ENCODE measurements at regions of chr12 and their contacts with region 1.

Region 1: GRCh38 chr12:132761032-132761920 is at the start of gene ANKLE2:
- H3K4me3 Mint-ChIP-seq: peak within 1 kb of the TSS; percentile 92
- H3K27ac Mint-ChIP-seq: peak within 1 kb of the TSS; percentile 87
- H3K4me1 Mint-ChIP-seq: peaks cover 47% of the 10 kb centered on the region
- H3K27me3 Mint-ChIP-seq: no peaks in the 10 kb centered on the region

Region 2: DNA sequence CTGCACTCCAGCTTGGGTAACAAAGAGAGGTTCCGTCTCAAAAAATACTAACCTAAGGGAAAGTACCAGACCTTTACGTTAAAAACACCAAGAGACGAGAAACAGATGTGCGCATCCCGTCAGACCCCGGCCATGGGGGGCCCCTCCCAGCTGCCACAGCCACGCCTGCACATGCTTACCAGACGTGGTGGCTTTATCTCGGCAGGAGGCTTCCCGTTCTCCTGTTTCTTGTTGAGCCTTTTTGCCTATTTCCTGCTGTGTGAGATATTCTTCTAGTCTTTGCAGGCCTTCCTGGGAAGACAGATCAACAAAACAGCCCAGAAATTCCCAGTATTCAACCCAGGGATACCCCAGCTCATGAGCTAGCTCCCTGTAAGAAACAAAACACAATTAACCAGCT is 27.1 kb before region 1 on chr12:
- intact Hi-C with region 1: no loop called
- H3K4me3 Mint-ChIP-seq: no peak overlapping the region
- H3K27ac Mint-ChIP-seq: no peak overlapping the region
- H3K4me1 Mint-ChIP-seq: no peaks in the 10 kb centered on the region
- H3K27me3 Mint-ChIP-seq: no peaks in the 10 kb centered on the region

Region 3: DNA sequence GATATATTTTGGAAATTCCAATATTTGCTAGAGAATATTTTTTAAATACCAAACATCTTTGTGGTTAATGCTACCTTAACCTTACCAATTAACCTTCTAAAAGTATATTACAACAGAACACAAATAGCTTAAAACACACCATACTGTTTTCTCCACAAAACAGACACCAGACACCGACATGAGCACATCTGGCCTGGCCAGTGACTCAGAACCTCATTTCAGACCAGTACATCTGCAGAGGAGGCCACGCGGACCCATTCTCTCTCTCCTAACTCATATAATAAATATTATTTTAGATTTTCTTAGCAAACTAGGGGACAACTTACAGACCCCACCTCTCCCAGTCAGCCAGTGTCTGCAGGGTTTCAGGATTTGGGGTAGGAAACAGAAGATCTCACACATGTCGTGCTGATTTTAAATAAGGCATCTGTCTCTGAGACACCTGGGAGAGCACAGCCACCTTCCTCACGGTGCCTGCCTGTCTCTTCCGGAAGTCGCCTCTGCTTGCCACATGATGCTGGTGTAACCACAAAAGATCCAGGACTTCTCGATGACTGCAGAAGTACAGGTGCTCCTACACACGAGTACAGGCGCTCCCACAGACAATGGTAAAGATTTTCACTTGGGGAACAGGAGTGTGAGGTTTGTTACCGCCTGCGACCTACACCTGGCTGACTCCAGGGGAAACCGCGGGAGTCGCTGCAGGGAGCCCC is 10.0 kb after region 1 on chr12:
- intact Hi-C with region 1: loop called (anchors 1 kb)
- H3K4me3 Mint-ChIP-seq: peak overlapping the region; percentile 31
- H3K27ac Mint-ChIP-seq: peak overlapping the region; percentile 99
- H3K4me1 Mint-ChIP-seq: peaks cover 69% of the 10 kb centered on the region
- H3K27me3 Mint-ChIP-seq: no peaks in the 10 kb centered on the region

Region 4: GRCh38 chr12:132828706-132829534 is 67.6 kb after region 1 on chr12 and contains the start of gene GOLGA3:
- intact Hi-C with region 1: loop called (anchors 5 kb)
- H3K4me3 Mint-ChIP-seq: peak within 1 kb of the TSS; percentile 95
- H3K27ac Mint-ChIP-seq: peak within 1 kb of the TSS; percentile 99
- H3K4me1 Mint-ChIP-seq: peaks cover 43% of the 10 kb centered on the region
- H3K27me3 Mint-ChIP-seq: no peaks in the 10 kb centered on the region

Region 5: DNA sequence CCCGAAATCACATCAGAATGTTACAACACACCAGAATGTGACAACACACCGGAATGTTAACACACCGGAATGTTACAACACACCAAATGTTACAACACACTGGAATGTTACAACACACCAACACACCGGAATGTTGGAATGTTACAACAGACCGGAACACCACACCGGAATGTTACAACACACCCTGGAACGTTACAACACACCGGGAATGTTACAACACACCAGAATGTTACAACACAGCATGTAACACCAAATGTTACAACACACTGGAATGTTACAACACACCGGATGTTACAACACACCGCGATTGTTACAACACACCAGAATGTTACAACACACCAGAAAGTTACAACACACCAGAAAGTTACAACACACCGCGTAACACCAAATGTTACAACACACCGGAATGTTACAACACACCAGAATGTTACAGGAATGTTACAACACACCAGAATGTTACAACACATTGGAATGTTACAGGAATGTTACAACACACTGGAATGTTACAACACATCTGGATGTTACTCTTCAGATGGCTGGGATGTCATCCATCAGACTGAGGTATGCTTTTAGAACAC is 105.1 kb after region 1 on chr12:
- intact Hi-C with region 1: no loop called
- H3K4me3 Mint-ChIP-seq: no peak overlapping the region
- H3K27ac Mint-ChIP-seq: no peak overlapping the region
- H3K4me1 Mint-ChIP-seq: no peaks in the 10 kb centered on the region
- H3K27me3 Mint-ChIP-seq: no peaks in the 10 kb centered on the region

Region 6: GRCh38 chr12:132887513-132888351 is 126.5 kb after region 1 on chr12 and contains the start of gene CHFR:
- intact Hi-C with region 1: no loop called
- H3K4me3 Mint-ChIP-seq: peak within 1 kb of the TSS; percentile 91
- H3K27ac Mint-ChIP-seq: peak within 1 kb of the TSS; percentile 100
- H3K4me1 Mint-ChIP-seq: peaks cover 19% of the 10 kb centered on the region
- H3K27me3 Mint-ChIP-seq: peaks cover 15% of the 10 kb centered on the region

Region 7: GRCh38 chr12:132940071-132940719 is 178.9 kb after region 1 on chr12:
- intact Hi-C with region 1: no loop called
- H3K4me3 Mint-ChIP-seq: no peak overlapping the region
- H3K27ac Mint-ChIP-seq: no peak overlapping the region
- H3K4me1 Mint-ChIP-seq: no peaks in the 10 kb centered on the region
- H3K27me3 Mint-ChIP-seq: no peaks in the 10 kb centered on the region

Measured in dendritic cell treated with granulocyte-macrophage colony-stimulating factor and Interleukin-4, amounts not matched to agents 40 ng/mL and 50 ng/mL, for 4 days (primary cell).